WTC11 (cell line): ENCODE measurements at regions of chr1 and their contacts with region 1.

Region 1: DNA sequence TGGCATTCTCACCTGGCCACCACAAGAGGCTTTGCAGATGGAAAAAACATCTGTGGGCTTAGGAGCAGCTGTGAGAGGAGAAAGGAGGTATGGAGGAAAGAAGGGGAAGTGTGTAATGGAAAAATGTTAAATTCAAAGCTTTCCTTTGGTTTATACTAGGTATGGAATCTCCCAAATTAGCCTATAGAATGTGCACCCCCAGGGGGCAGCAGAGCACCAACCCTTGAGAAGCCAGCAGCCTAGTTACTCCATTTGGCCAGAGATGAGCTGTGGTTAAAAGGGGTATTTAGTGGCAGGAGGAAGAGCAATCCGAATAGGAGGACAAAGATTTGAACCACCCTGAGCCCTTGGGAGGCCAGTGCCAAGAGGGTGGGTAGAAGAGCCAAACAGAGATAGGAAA is 97.5 kb upstream of the CTTNBP2NL start:
- DNase-seq: peak; percentile 79
- ATAC-seq: peak; percentile 90
- H3K4me3 Mint-ChIP-seq: no peak overlapping the region
- H3K27ac Mint-ChIP-seq: no peak overlapping the region
- H3K4me1 Mint-ChIP-seq: no peaks in the 10 kb centered on the region
- H3K27me3 Mint-ChIP-seq: no peaks in the 10 kb centered on the region; the same call in 1 of the 2 replicates
- CTCF ChIP-seq: peak; percentile 65

Region 2: GRCh38 chr1:112285746-112286145 is 12.8 kb before region 1 on chr1:
- CTCF ChIA-PET with region 1: interaction called, 39 read pairs
- POLR2A ChIA-PET with region 1: no interaction called
- DNase-seq: no peak
- ATAC-seq: no peak
- H3K4me3 Mint-ChIP-seq: no peak overlapping the region
- H3K27ac Mint-ChIP-seq: no peak overlapping the region
- H3K4me1 Mint-ChIP-seq: no peaks in the 10 kb centered on the region
- H3K27me3 Mint-ChIP-seq: peaks cover 10% of the 10 kb centered on the region
- CTCF ChIP-seq: no peak

Region 3: DNA sequence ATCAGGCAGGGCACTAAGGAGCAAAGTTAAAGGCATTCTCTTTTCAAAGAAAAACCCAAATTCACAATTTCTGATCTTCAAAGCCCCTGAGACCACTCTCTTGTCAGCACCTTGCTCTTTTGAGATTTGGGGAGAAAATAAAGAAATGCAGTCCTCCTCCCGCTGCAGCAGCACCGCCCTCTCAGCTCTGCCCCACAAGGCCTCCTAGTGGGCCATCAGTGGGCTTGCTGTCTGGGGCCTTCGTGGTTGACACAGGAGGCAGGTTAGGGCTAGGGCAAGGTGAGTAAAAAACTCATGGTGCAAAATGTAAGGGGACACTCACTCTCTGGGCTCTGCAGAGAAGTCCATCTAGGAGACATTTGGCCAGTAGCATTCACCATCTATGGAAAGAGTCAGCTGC is 30.0 kb after region 1 on chr1:
- CTCF ChIA-PET with region 1: interaction called, 11 read pairs
- POLR2A ChIA-PET with region 1: no interaction called
- DNase-seq: no peak
- ATAC-seq: peak; percentile 38; the same call in 1 of the 2 replicates
- H3K4me3 Mint-ChIP-seq: no peak overlapping the region
- H3K27ac Mint-ChIP-seq: no peak overlapping the region
- H3K4me1 Mint-ChIP-seq: peaks cover 3% of the 10 kb centered on the region; the same call in 1 of the 2 replicates
- H3K27me3 Mint-ChIP-seq: peaks cover 36% of the 10 kb centered on the region
- CTCF ChIP-seq: no peak

Region 4: GRCh38 chr1:112358798-112359408 is 60.3 kb after region 1 on chr1:
- CTCF ChIA-PET with region 1: interaction called, 26 read pairs
- POLR2A ChIA-PET with region 1: no interaction called
- DNase-seq: peak; percentile 77
- ATAC-seq: peak; percentile 97
- H3K4me3 Mint-ChIP-seq: no peak overlapping the region
- H3K27ac Mint-ChIP-seq: no peak overlapping the region
- H3K4me1 Mint-ChIP-seq: peaks cover 18% of the 10 kb centered on the region
- H3K27me3 Mint-ChIP-seq: peaks cover 8% of the 10 kb centered on the region
- CTCF ChIP-seq: peak; percentile 60